ENCODE measurements at regions of chr20 and their contacts with region 1.

Region 1: DNA sequence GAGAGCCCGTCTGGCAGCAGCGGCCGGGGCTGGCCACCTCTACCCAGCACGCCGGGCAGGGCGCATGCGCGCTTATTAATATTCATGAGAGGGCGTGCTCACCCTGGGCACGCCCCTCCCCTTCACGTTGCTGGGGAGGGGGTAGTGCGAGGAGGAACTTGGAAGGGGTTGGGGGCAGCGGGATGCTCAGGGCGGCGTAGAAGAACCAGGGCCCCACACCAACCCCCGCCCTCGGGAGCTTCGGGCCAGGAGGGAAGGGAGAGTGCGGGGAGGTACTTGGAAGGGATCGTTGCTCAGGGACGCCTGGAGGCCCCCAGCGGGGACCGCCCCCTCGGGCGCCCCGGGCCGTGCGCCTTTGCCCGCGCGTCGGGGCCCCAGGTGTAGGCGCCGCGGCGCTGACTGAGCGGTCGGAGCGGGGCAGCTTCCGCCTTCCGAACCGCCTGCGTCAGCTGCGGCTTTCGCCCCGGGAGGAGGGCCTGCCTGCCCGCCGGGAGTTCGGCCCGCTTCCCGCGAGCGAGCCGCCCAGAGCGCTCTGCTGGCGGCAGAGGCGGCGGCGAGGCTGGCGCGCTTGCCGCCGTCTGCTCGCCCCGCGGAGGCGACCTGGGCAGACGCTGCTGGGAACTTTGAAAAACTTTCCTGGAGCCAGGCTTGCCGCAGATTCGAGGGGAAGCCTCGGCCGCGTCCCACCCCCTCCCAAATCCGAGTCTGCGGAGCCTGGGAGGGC is at the start of gene JAG1:
- DNase-seq: peak; percentile 99
- ATAC-seq: peak; percentile 56
- H3K4me3 ChIP-seq: peak within 1 kb of the TSS; percentile 95
- H3K27ac ChIP-seq: peak within 1 kb of the TSS; percentile 95
- H3K4me1 ChIP-seq: peaks cover 38% of the 10 kb centered on the region
- H3K27me3 ChIP-seq: no peaks in the 10 kb centered on the region
- CTCF ChIP-seq: no peak
- total RNA-seq, gene JAG1: 176 and 184 TPM in 2 replicates

Region 2: DNA sequence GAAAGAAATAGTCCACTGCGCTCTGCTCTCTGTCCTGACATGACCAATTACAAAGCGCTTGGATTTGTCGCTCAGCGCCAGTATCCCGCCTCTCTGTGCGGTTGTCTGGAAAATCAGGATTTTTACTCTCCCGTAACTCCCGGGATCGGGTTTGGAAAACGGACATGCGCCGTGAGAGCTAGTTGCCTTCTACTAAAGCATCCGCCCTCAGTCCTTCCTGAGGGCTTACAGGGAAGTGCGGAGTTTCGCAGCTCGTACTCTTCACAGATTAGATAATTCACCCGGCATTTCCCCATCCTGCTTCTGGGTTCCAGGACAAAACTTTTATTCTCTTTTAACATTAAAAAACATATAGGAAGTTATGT is 239.7 kb before region 1 on chr20:
- CTCF ChIA-PET with region 1: no interaction called
- POLR2A ChIA-PET with region 1: interaction called, 5 read pairs
- intact Hi-C with region 1: loop called (anchors 5 kb)
- DNase-seq: peak; percentile 99
- ATAC-seq: peak; percentile 76
- H3K4me3 ChIP-seq: peak overlapping the region; percentile 73
- H3K27ac ChIP-seq: peak overlapping the region; percentile 79
- H3K4me1 ChIP-seq: peaks cover 42% of the 10 kb centered on the region
- H3K27me3 ChIP-seq: no peaks in the 10 kb centered on the region
- CTCF ChIP-seq: no peak

Region 3: GRCh38 chr20:10708351-10709185 is 34.4 kb after region 1 on chr20:
- CTCF ChIA-PET with region 1: no interaction called
- POLR2A ChIA-PET with region 1: interaction called, 7 read pairs
- intact Hi-C with region 1: loop called (anchors 2 kb)
- DNase-seq: peak; percentile 92
- ATAC-seq: peak; percentile 30
- H3K4me3 ChIP-seq: no peak overlapping the region
- H3K27ac ChIP-seq: peak overlapping the region; percentile 79
- H3K4me1 ChIP-seq: peaks cover 52% of the 10 kb centered on the region
- H3K27me3 ChIP-seq: no peaks in the 10 kb centered on the region
- CTCF ChIP-seq: no peak

Region 4: DNA sequence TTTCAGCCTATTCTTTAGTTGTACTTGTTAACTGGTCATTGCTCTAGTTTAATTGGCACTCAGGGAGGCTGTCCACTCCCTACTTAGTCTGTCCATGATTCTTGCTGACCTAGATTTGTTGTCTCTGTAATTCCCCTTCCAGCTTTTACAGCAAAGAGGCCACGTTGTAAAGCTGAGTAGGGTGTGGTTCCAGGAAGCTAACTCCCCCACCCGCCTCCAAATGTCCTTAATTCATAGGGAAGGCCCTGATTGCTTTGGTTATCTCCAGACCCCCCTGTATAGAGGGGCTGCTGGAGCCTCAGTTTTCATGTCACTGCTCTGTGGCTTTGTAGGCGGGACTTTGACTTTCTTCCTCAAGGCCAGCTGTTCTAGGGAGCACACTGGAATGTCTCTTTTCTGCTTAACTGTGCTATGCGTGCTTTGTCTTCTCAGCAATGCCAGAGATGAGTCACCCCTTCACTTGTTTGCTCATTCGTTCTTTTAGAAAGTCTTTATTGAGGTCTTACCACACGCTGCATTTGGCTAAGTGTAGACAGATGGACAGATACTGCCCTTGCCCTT is 174.7 kb after region 1 on chr20:
- CTCF ChIA-PET with region 1: no interaction called
- POLR2A ChIA-PET with region 1: interaction called, 3 read pairs
- intact Hi-C with region 1: loop called (anchors 1 kb)
- DNase-seq: peak; percentile 95
- ATAC-seq: peak; percentile 92
- H3K4me3 ChIP-seq: no peak overlapping the region; the same call in 1 of the 2 replicates
- H3K27ac ChIP-seq: peak overlapping the region; percentile 86
- H3K4me1 ChIP-seq: peaks cover 16% of the 10 kb centered on the region
- H3K27me3 ChIP-seq: no peaks in the 10 kb centered on the region
- CTCF ChIP-seq: no peak

Region 5: DNA sequence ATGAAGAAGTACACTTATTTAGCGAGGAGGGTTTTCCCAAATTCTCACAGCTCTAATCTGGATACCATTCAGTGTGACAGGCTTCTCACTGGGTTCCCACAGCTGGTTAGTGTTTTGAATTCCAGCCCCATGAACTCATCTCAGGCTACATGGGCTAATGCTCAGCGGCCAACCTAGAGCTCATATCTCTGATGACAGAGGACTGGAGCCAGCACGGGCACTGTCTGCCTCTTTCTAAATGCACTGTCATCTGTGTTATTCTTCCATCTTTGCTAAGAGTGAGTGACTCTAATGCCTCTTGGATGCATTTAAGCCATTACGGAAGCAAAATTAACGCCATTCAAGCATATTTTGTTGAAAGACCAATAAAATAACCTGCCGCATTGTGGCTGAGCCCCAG is 308.5 kb after region 1 on chr20:
- CTCF ChIA-PET with region 1: no interaction called
- POLR2A ChIA-PET with region 1: no interaction called
- intact Hi-C with region 1: loop called (anchors 5 kb)
- DNase-seq: peak; percentile 72
- ATAC-seq: peak; percentile 95
- H3K4me3 ChIP-seq: no peak overlapping the region
- H3K27ac ChIP-seq: no peak overlapping the region
- H3K4me1 ChIP-seq: peaks cover 12% of the 10 kb centered on the region; the same call in 1 of the 2 replicates
- H3K27me3 ChIP-seq: no peaks in the 10 kb centered on the region
- CTCF ChIP-seq: no peak

Region 6: GRCh38 chr20:11204926-11205768 is 531.0 kb after region 1 on chr20:
- CTCF ChIA-PET with region 1: interaction called, 5 read pairs
- POLR2A ChIA-PET with region 1: interaction called, 4 read pairs
- intact Hi-C with region 1: loop called (anchors 5 kb)
- DNase-seq: peak; percentile 84
- ATAC-seq: peak; percentile 42
- H3K4me3 ChIP-seq: no peak overlapping the region
- H3K27ac ChIP-seq: no peak overlapping the region
- H3K4me1 ChIP-seq: peaks cover 51% of the 10 kb centered on the region
- H3K27me3 ChIP-seq: no peaks in the 10 kb centered on the region
- CTCF ChIP-seq: peak; percentile 96

Region 7: DNA sequence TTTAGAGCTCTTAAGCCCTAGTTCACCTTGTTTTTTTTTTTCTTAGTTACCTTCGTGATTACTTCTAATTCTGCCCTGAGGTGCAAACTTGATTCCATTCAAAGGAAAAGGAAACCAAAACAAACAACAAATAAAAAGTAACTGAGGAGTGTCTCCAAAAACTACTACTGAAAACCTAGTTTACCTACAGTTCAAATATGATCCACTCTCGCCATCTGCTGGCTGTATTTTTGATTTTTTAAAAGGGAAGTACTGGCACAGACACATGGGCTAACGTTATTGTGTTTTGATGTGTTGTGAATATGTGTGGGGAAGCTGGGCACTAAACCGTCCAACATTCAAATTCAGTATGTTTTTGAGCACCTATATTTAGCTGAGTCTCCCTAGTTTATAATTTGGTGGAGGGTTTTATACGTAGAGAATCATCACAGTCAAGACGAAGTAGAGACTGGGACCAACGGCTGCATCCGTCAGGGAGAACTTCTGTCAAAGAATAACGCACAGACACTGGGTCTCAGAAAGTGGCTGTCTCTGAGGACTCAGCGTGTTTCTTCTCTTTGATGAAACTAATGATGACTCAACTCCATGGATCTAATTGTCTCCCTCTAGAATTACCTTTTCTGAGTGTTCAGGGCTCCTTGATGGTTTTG is 870.0 kb after region 1 on chr20:
- CTCF ChIA-PET with region 1: interaction called, 4 read pairs
- POLR2A ChIA-PET with region 1: no interaction called
- intact Hi-C with region 1: loop called (anchors 1 kb)
- DNase-seq: peak; percentile 94
- ATAC-seq: peak; percentile 91
- H3K4me3 ChIP-seq: peak overlapping the region; percentile 55
- H3K27ac ChIP-seq: no peak overlapping the region
- H3K4me1 ChIP-seq: peaks cover 11% of the 10 kb centered on the region
- H3K27me3 ChIP-seq: no peaks in the 10 kb centered on the region
- CTCF ChIP-seq: peak; percentile 90